Posterior vena cava (tissue), 2 donors: ENCODE measurements at regions of chr17 and their contacts with region 1.

Region 1: GRCh38 chr17:61128661-61129115 is 271.0 kb upstream of the TBX2 start:
- DNase-seq: no peak

Region 2: GRCh38 chr17:59734226-59734625 is 1394.5 kb before region 1 on chr17:
- intact Hi-C with region 1: no loop called
- DNase-seq: no peak

Region 3: GRCh38 chr17:61106354-61106753 is 22.3 kb before region 1 on chr17:
- intact Hi-C with region 1: loop called in 1 of 2 experiments (anchors 2 kb)
- DNase-seq: no peak